GM12878 (cell line): ENCODE measurements at regions of chr5 and their contacts with region 1.

Region 1: GRCh38 chr5:151051066-151051930 is 29.5 kb downstream of the TNIP1 start:
- DNase-seq: peak; percentile 43
- ATAC-seq: peak; percentile 93
- H3K4me3 ChIP-seq: no peak overlapping the region
- H3K27ac ChIP-seq: no peak overlapping the region
- H3K4me1 ChIP-seq: no peaks in the 10 kb centered on the region; the same call in 1 of the 2 replicates
- H3K27me3 ChIP-seq: no peaks in the 10 kb centered on the region
- CTCF ChIP-seq: peak; percentile 86 to 87 (median 86)
- EP300 ChIP-seq: no peak
- POLR2A ChIP-seq: no peak
- RAD21 ChIP-seq: peak; percentile 91

Region 2: DNA sequence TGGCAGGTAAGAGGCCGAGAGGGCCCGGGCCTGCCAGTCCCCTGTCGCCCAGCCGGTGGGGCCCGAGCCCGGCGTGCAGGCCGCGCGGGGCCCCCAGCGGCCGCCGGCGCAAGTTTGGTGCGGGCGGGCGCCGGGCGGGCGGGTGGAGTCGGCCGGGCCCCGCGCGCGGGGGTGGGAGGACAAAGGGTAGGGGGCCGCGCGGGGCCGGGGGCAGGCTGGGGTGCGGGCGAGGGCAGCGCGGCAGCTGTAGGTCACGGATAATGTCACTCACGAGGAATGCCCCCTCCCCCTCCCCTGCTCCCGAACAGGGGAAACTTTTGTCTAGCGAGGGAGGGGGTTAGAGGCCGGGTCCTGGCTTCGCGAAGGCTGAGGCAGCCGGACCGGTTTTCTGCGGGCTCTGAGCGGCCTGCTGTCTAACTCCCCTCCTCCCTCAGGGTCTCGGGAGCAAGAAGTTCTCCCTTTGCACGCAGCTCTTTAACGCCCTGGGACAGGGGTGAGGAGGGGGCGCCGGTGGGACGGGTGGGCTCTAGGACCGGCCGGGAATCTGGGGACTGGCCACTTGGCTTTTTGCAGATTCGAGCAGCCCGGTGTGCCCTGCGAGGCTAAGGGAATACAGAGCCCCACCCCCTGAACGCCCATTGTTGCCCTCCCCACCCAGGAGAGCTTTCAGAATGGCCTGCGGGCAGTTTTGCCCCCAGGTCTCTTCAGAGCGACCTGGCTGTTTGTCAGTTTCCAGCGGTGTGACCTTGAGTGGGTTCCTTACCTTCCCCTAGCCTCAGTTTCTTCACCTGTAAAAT is 564.7 kb before region 1 on chr5:
- CTCF ChIA-PET with region 1: no interaction called
- POLR2A ChIA-PET with region 1: no interaction called
- RAD21 ChIA-PET with region 1: no interaction called
- SMC1A ChIA-PET with region 1: no interaction called
- in situ Hi-C with region 1: no loop called
- intact Hi-C with region 1: no loop called
- DNase-seq: no peak
- ATAC-seq: peak; percentile 35
- H3K4me3 ChIP-seq: peak overlapping the region; percentile 88
- H3K27ac ChIP-seq: peak overlapping the region; percentile 72
- H3K4me1 ChIP-seq: peaks cover 47% of the 10 kb centered on the region
- H3K27me3 ChIP-seq: no peaks in the 10 kb centered on the region
- CTCF ChIP-seq: no peak; a peak in 1 of 6 replicates
- EP300 ChIP-seq: no peak
- POLR2A ChIP-seq: no peak
- RAD21 ChIP-seq: no peak

Region 3: DNA sequence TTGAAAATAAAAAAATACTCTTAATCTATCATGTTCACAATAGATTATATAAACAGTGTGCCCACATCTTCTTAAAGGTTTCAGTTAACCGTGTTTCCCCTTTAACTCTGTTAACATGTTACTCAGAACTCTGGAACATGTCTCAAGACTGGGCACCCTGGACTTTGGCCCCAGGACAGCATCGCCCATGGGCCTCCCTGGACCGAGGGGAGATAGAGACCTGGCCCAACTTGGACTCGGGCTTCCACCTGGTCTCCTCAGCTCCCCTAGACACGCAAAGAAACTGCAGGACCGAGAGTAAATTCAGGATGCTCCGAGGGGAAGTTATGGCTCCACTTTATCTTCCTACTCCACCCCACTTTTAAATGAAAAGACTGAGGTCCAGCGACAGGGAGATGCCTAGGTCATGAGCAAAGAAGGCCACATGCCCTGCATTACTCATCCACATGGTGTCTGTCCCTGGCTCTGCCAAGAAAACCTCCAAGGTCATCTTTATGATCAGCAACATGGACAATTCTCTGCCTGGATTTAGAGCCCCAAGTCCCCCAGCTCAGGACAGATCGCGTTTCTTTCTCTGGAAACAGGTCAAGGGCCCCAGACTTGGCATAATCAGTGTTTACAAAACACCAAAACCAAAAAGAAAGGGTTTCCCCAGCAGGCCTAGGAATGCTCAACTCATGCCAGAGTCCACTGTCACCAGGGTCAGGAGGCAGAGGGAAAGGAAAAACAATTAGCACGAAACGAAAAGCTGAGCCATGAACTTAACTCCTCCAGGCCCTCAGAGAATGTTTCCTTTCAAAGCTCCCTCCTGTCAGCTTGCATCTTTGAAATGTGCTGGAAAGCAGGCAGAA is 13.5 kb before region 1 on chr5:
- CTCF ChIA-PET with region 1: interaction called, 19 read pairs
- POLR2A ChIA-PET with region 1: no interaction called
- RAD21 ChIA-PET with region 1: no interaction called
- SMC1A ChIA-PET with region 1: interaction called, 9 read pairs
- in situ Hi-C with region 1: no loop called
- intact Hi-C with region 1: no loop called
- DNase-seq: no peak
- ATAC-seq: no peak
- H3K4me3 ChIP-seq: no peak overlapping the region
- H3K27ac ChIP-seq: no peak overlapping the region
- H3K4me1 ChIP-seq: no peaks in the 10 kb centered on the region
- H3K27me3 ChIP-seq: no peaks in the 10 kb centered on the region
- CTCF ChIP-seq: no peak
- EP300 ChIP-seq: no peak
- POLR2A ChIP-seq: no peak
- RAD21 ChIP-seq: no peak

Region 4: GRCh38 chr5:151075698-151076331 is 24.5 kb after region 1 on chr5:
- CTCF ChIA-PET with region 1: interaction called, 30 read pairs
- POLR2A ChIA-PET with region 1: interaction called, 4 read pairs
- RAD21 ChIA-PET with region 1: interaction called, 10 read pairs
- SMC1A ChIA-PET with region 1: interaction called, 26 read pairs
- in situ Hi-C with region 1: no loop called
- intact Hi-C with region 1: no loop called
- DNase-seq: no peak
- ATAC-seq: peak; percentile 7
- H3K4me3 ChIP-seq: peak overlapping the region; percentile 89
- H3K27ac ChIP-seq: peak overlapping the region; percentile 90
- H3K4me1 ChIP-seq: peaks cover 45% of the 10 kb centered on the region
- H3K27me3 ChIP-seq: no peaks in the 10 kb centered on the region
- CTCF ChIP-seq: no peak
- EP300 ChIP-seq: no peak
- POLR2A ChIP-seq: peak; percentile 63
- RAD21 ChIP-seq: no peak

Region 5: DNA sequence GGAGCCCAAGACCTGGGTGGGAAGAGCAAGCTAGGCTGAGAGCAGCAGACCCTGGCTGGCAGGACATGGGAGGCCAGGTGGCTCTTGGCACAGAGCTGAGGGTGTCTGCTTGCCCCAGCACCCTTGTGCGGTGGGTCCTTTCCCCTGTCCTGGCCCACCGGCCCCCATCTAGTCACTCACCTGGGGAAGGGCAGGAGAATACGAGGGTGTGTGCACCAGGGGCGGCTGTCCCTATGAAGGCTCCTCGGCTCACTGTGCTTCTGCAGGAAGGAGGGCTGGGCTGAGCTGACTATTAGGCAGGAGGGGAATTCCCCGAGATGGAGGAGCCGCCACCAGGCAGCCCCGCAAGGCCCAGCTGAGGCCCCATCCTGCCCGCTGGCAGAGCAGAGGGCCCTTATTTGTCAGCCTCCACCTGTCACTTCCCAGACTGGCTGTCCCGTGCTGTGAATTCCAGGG is 35.6 kb after region 1 on chr5:
- CTCF ChIA-PET with region 1: interaction called, 30 read pairs
- POLR2A ChIA-PET with region 1: no interaction called
- RAD21 ChIA-PET with region 1: interaction called, 6 read pairs
- SMC1A ChIA-PET with region 1: interaction called, 26 read pairs
- in situ Hi-C with region 1: no loop called
- intact Hi-C with region 1: no loop called
- DNase-seq: no peak
- ATAC-seq: peak; percentile 79
- H3K4me3 ChIP-seq: peak overlapping the region; percentile 89
- H3K27ac ChIP-seq: peak overlapping the region; percentile 88
- H3K4me1 ChIP-seq: peaks cover 29% of the 10 kb centered on the region
- H3K27me3 ChIP-seq: no peaks in the 10 kb centered on the region
- CTCF ChIP-seq: no peak
- EP300 ChIP-seq: no peak
- POLR2A ChIP-seq: peak; percentile 89
- RAD21 ChIP-seq: no peak

Region 6: GRCh38 chr5:151104795-151105194 is 53.5 kb after region 1 on chr5:
- CTCF ChIA-PET with region 1: interaction called, 691 read pairs
- POLR2A ChIA-PET with region 1: interaction called, 4 read pairs
- RAD21 ChIA-PET with region 1: interaction called, 13 read pairs
- SMC1A ChIA-PET with region 1: interaction called, 279 read pairs
- in situ Hi-C with region 1: no loop called
- intact Hi-C with region 1: no loop called
- DNase-seq: no peak
- ATAC-seq: no peak
- H3K4me3 ChIP-seq: no peak overlapping the region
- H3K27ac ChIP-seq: no peak overlapping the region
- H3K4me1 ChIP-seq: peaks cover 8% of the 10 kb centered on the region
- H3K27me3 ChIP-seq: no peaks in the 10 kb centered on the region
- CTCF ChIP-seq: no peak
- EP300 ChIP-seq: no peak
- POLR2A ChIP-seq: no peak
- RAD21 ChIP-seq: no peak

Region 7: DNA sequence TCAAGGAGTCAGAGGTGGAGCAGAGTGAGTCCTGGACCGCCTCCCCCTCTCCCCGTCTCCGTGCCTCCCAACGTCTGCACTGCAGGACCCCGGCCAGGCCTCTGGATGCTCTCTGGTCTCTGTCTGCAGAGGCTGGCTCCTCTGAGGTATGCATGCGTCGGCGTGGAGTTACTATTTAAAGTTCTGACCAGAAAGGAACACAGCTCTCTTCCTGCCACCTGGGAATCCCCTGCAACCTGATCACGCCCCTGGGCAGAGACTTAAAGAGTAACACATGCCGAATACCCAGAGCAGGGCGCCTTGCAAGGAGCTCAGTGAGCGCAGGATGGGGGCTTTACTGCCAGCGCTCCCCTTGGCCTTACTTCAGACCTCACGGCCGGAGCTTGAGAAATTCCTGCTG is 90.2 kb after region 1 on chr5:
- CTCF ChIA-PET with region 1: interaction called, 7 read pairs
- POLR2A ChIA-PET with region 1: no interaction called
- RAD21 ChIA-PET with region 1: interaction called, 11 read pairs
- SMC1A ChIA-PET with region 1: interaction called, 3 read pairs
- in situ Hi-C with region 1: no loop called
- intact Hi-C with region 1: no loop called
- DNase-seq: no peak
- ATAC-seq: peak; percentile 90
- H3K4me3 ChIP-seq: peak overlapping the region; percentile 52
- H3K27ac ChIP-seq: peak overlapping the region; percentile 61
- H3K4me1 ChIP-seq: peaks cover 60% of the 10 kb centered on the region
- H3K27me3 ChIP-seq: no peaks in the 10 kb centered on the region
- CTCF ChIP-seq: no peak
- EP300 ChIP-seq: no peak
- POLR2A ChIP-seq: peak; percentile 67
- RAD21 ChIP-seq: 0 out of 2 replicates have a peak, but pooled peaks have one; percentile 13

Region 8: GRCh38 chr5:151239237-151239861 is 188.1 kb after region 1 on chr5:
- CTCF ChIA-PET with region 1: interaction called, 13 read pairs
- POLR2A ChIA-PET with region 1: no interaction called
- RAD21 ChIA-PET with region 1: interaction called, 11 read pairs
- SMC1A ChIA-PET with region 1: interaction called, 6 read pairs
- in situ Hi-C with region 1: no loop called
- intact Hi-C with region 1: no loop called
- DNase-seq: no peak
- ATAC-seq: peak; percentile 61
- H3K4me3 ChIP-seq: no peak overlapping the region; the same call in 1 of the 2 replicates
- H3K27ac ChIP-seq: no peak overlapping the region
- H3K4me1 ChIP-seq: peaks cover 70% of the 10 kb centered on the region
- H3K27me3 ChIP-seq: no peaks in the 10 kb centered on the region
- CTCF ChIP-seq: peak; percentile 66 to 72 (median 72)
- EP300 ChIP-seq: no peak
- POLR2A ChIP-seq: no peak
- RAD21 ChIP-seq: peak; percentile 82